ENCODE measurements at regions of chr11 and their contacts with region 1.

Region 1: GRCh38 chr11:117098269-117099232 is at the start of gene SIK3:
- DNase-seq: peak; percentile 78
- H3K4me3 ChIP-seq: peak within 1 kb of the TSS; percentile 90
- CTCF ChIP-seq: peak; percentile 58

Region 2: GRCh38 chr11:116879800-116880625 is 218.5 kb before region 1 on chr11:
- in situ Hi-C with region 1: loop called (anchors 25 kb)
- DNase-seq: peak; percentile 73
- H3K4me3 ChIP-seq: no peak overlapping the region
- CTCF ChIP-seq: peak; percentile 78

Region 3: DNA sequence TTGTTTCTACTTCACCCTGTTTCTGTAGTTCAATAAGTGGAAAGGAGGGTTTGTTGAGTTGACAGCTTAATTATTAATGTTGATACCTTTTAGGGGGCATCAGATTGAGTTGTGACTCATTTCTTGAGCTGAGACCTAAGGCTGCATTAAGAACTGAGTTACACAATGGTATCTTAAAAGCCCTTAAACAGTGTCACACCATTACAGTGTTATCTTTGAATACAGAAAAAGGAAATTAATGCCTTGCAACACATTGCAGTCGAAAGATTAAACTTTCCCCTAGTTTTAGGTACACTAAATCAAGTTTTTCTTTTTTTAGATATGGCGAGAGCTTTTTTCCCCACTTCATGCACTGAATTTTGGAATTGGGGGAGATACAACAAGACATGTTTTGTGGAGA is 62.3 kb after region 1 on chr11:
- in situ Hi-C with region 1: no loop called
- DNase-seq: no peak
- H3K4me3 ChIP-seq: no peak overlapping the region
- CTCF ChIP-seq: no peak

Region 4: DNA sequence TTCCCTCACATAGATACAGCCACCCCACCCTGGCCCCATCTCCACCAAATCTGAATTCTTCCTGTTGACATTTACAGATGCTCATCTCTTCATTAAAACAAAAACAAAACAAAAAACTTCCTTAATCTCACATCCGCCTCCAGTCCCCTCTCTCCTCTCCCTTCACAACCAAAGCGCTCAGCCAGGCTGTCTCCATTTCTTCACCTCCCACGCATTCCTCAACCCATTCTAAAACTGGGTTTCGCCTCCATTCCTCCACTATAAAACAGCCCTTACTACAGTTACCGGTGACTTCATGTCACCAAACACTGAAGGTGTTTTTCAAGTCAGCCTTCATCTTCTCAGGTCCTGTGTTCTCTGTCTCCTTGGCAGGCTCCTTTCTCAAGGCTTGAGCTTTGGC is 202.2 kb after region 1 on chr11:
- in situ Hi-C with region 1: no loop called
- DNase-seq: no peak
- H3K4me3 ChIP-seq: no peak overlapping the region
- CTCF ChIP-seq: no peak